Transverse colon (tissue), 4 donors: ENCODE measurements at regions of chr10 and their contacts with region 1.

Region 1: GRCh38 chr10:133318494-133319127 is 9.9 kb downstream of the ZNF511 start:
- DNase-seq: peak; percentile 76
- H3K4me3 ChIP-seq: peak overlapping the region in 3 of 4 donors; percentile 12 to 44 (median 25)
- H3K27ac ChIP-seq: no peak overlapping the region
- H3K4me1 ChIP-seq: peaks cover 0 to 7% (median 6%) of the 10 kb centered on the region in 4 donors
- H3K27me3 ChIP-seq: peaks cover 7% of the 10 kb centered on the region
- CTCF ChIP-seq: peak; percentile 68 to 79 (median 76)
- EP300 ChIP-seq: no peak
- POLR2A ChIP-seq: no peak

Region 2: DNA sequence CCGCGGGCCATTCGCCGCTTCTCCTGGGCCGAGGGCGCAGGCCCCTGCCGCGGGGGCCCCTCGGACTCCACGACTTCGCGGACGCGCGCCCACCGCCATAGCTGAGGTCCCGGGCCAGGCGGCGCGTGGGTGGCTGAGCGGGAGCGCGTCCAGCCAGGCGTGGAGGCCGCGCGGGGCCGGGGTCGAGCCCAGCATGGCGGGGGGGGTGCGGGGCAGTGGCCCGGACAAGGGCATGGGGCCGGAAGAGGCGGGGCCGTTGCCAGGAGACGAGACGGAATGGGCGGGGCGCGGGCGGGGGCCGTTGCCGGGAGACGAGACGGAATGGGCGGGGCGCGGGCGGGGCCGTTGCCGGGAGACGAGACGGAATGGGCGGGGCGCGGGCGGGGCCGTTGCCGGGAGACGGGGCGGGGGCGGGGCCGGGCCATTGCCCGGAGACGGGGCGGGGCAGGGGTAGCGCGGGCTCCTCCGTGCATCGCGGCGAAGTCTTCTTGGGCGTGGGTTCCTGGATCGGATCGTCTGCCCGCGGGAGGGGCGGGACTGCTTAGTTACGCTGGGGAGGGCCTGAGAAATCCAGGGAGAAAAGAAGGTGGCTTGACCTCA is 56.8 kb before region 1 on chr10:
- in situ Hi-C with region 1: loop called in 1 of 4 experiments (anchors 10 kb)
- intact Hi-C with region 1: no loop called
- DNase-seq: peak; percentile 91
- H3K4me3 ChIP-seq: peak overlapping the region; percentile 79 to 96 (median 84)
- H3K27ac ChIP-seq: peak overlapping the region; percentile 92 to 98 (median 94)
- H3K4me1 ChIP-seq: peaks cover 35 to 73% (median 53%) of the 10 kb centered on the region in 4 donors
- H3K27me3 ChIP-seq: no peaks in the 10 kb centered on the region
- CTCF ChIP-seq: no peak
- EP300 ChIP-seq: no peak
- POLR2A ChIP-seq: no peak

Region 3: GRCh38 chr10:133388973-133389818 is 70.6 kb after region 1 on chr10:
- in situ Hi-C with region 1: loop called in 1 of 4 experiments (anchors 10 kb)
- intact Hi-C with region 1: no loop called
- DNase-seq: peak; percentile 57
- H3K4me3 ChIP-seq: peak overlapping the region in 2 of 4 donors; percentile 15 to 27
- H3K27ac ChIP-seq: peak overlapping the region; percentile 59 to 83 (median 72)
- H3K4me1 ChIP-seq: peaks cover 0 to 6% (median 0%) of the 10 kb centered on the region in 4 donors
- H3K27me3 ChIP-seq: no peaks in the 10 kb centered on the region
- CTCF ChIP-seq: no peak
- EP300 ChIP-seq: no peak
- POLR2A ChIP-seq: no peak